ENCODE measurements at regions of chr6 and their contacts with region 1.

Region 1: GRCh38 chr6:137823826-137824555 is 43.1 kb upstream of the TNFAIP3 start:
- DNase-seq: peak; percentile 85
- ATAC-seq: peak; percentile 44
- H3K4me3 Mint-ChIP-seq: peak overlapping the region; percentile 60
- H3K27ac Mint-ChIP-seq: peak overlapping the region; percentile 93
- H3K4me1 Mint-ChIP-seq: peaks cover 86% of the 10 kb centered on the region
- H3K27me3 Mint-ChIP-seq: no peaks in the 10 kb centered on the region
- CTCF ChIP-seq: no peak

Region 2: GRCh38 chr6:137811121-137811915 is 12.7 kb before region 1 on chr6:
- CTCF ChIA-PET with region 1: interaction called, 4 read pairs
- POLR2A ChIA-PET with region 1: interaction called, 21 read pairs
- intact Hi-C with region 1: loop called (anchors 1 kb)
- DNase-seq: peak; percentile 93
- ATAC-seq: peak; percentile 89
- H3K4me3 Mint-ChIP-seq: peak overlapping the region; percentile 60
- H3K27ac Mint-ChIP-seq: peak overlapping the region; percentile 86
- H3K4me1 Mint-ChIP-seq: peaks cover 70% of the 10 kb centered on the region
- H3K27me3 Mint-ChIP-seq: no peaks in the 10 kb centered on the region
- CTCF ChIP-seq: no peak